CD8-positive, alpha-beta T cell (primary cell): ENCODE measurements at regions of chr7 and their contacts with region 1.

Region 1: GRCh38 chr7:150514748-150515222 is at the start of gene GIMAP7:
- DNase-seq: peak; percentile 36 to 87 (median 73)
- ATAC-seq: peak; percentile 82
- H3K4me3 ChIP-seq: peak within 1 kb of the TSS; percentile 63 to 76
- H3K4me3 Mint-ChIP-seq: peak within 1 kb of the TSS; percentile 100
- H3K27ac ChIP-seq: peak within 1 kb of the TSS; percentile 69 to 75
- H3K27ac Mint-ChIP-seq: peak within 1 kb of the TSS; percentile 99
- H3K4me1 ChIP-seq: peaks cover 45% of the 10 kb centered on the region
- H3K4me1 Mint-ChIP-seq: peaks cover 48% of the 10 kb centered on the region
- H3K27me3 ChIP-seq: no peaks in the 10 kb centered on the region
- H3K27me3 Mint-ChIP-seq: no peaks in the 10 kb centered on the region
- CTCF ChIP-seq: no peak
- total RNA-seq, gene GIMAP7: 21.2 to 29.7 TPM

Region 2: GRCh38 chr7:150476285-150476684 is 38.5 kb before region 1 on chr7:
- CTCF ChIA-PET with region 1: interaction called, 11 read pairs
- POLR2A ChIA-PET with region 1: interaction called, 193 read pairs
- intact Hi-C with region 1: loop called (anchors 1 to 2 kb)
- DNase-seq: no peak
- ATAC-seq: no peak
- H3K4me3 ChIP-seq: no peak overlapping the region
- H3K4me3 Mint-ChIP-seq: peak overlapping the region; percentile 1
- H3K27ac ChIP-seq: peak overlapping the region; percentile 55 to 91
- H3K27ac Mint-ChIP-seq: peak overlapping the region; percentile 100
- H3K4me1 ChIP-seq: peaks cover 64% of the 10 kb centered on the region
- H3K4me1 Mint-ChIP-seq: peaks cover 85% of the 10 kb centered on the region
- H3K27me3 ChIP-seq: no peaks in the 10 kb centered on the region
- H3K27me3 Mint-ChIP-seq: no peaks in the 10 kb centered on the region
- CTCF ChIP-seq: no peak

Region 3: DNA sequence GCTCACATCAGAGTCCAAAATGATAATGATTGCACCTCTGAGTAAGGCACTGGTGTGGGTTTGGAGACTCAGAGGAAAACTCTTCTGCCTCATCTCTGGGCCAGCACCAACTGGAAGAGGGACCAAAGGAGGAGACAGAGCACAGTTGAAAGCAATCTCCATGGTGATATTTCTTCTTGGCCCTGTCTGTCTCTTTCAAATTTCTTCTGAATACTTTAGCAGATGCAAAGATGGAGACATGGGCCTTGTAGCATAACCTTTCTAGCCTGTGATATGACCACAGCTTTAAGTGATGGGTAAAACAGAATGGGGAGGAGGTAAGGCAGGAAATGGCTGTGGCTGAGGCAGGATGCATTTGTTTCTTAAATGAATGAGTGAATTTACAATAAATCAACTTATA is 12.3 kb before region 1 on chr7:
- CTCF ChIA-PET with region 1: interaction called, 9 read pairs
- POLR2A ChIA-PET with region 1: interaction called, 27 read pairs
- intact Hi-C with region 1: loop called in 1 of 2 experiments (anchors 1 kb)
- DNase-seq: peak in 5 of 9 experiments; percentile 29 to 77 (median 61)
- ATAC-seq: peak; percentile 92
- H3K4me3 ChIP-seq: peak overlapping the region in 1 of 2 experiments; percentile 27
- H3K4me3 Mint-ChIP-seq: peak overlapping the region; percentile 23
- H3K27ac ChIP-seq: peak overlapping the region; percentile 22 to 61
- H3K27ac Mint-ChIP-seq: peak overlapping the region; percentile 86
- H3K4me1 ChIP-seq: peaks cover 46% of the 10 kb centered on the region
- H3K4me1 Mint-ChIP-seq: peaks cover 78% of the 10 kb centered on the region
- H3K27me3 ChIP-seq: no peaks in the 10 kb centered on the region
- H3K27me3 Mint-ChIP-seq: no peaks in the 10 kb centered on the region
- CTCF ChIP-seq: no peak

Region 4: DNA sequence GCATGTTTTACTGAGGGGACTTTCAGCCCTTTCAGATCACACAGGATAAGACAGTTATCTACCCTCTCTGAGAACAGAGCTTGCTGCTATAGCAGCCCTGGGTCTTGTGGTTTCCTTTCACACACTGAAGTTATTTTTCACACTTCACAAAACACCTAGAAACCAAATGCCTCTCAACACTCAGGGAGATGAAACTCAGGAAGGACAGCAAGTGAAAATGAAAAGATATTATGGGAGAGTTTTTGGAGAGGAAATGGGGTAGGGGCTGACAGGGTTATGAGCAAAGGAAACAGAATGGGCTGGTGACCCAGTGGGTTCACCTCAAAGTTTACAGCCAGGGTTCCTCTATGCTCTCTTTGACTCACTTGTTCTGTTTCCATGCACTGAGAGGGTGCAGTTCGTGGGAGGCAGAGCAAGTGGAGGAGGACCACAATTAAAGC is 153.7 kb after region 1 on chr7:
- CTCF ChIA-PET with region 1: no interaction called
- POLR2A ChIA-PET with region 1: interaction called, 18 read pairs
- intact Hi-C with region 1: no loop called
- DNase-seq: peak in 6 of 9 experiments; percentile 60 to 94 (median 72)
- ATAC-seq: peak; percentile 76
- H3K4me3 ChIP-seq: peak overlapping the region in 1 of 2 experiments; percentile 17
- H3K4me3 Mint-ChIP-seq: peak overlapping the region; percentile 36
- H3K27ac ChIP-seq: peak overlapping the region; percentile 63 to 95
- H3K27ac Mint-ChIP-seq: peak overlapping the region; percentile 97
- H3K4me1 ChIP-seq: peaks cover 88% of the 10 kb centered on the region
- H3K4me1 Mint-ChIP-seq: peaks cover 90% of the 10 kb centered on the region
- H3K27me3 ChIP-seq: no peaks in the 10 kb centered on the region
- H3K27me3 Mint-ChIP-seq: no peaks in the 10 kb centered on the region
- CTCF ChIP-seq: no peak

Region 5: DNA sequence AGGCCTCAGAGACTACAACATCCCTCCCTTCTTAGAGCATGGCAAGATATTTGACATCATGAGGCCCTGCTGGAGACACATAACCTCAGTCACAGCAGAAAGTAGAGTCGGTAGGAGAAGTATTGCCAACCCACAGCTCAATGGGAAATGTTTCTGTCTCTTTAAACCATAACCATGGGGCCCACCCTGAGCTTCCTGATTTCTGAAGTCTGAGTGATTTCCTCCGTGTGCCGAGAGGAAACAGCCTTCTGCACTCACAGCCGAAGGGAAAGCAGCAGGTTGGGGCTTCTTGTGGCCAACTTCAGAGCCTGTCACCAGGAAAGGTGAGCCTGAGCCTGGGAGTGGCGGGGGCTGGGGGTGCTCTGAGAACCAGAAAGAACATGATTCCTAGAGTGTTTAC is 201.6 kb after region 1 on chr7 and contains the start of gene GIMAP1:
- CTCF ChIA-PET with region 1: interaction called, 4 read pairs
- POLR2A ChIA-PET with region 1: interaction called, 29 read pairs
- intact Hi-C with region 1: no loop called
- DNase-seq: peak in 8 of 9 experiments; percentile 59 to 85 (median 73)
- ATAC-seq: peak; percentile 84
- H3K4me3 ChIP-seq: peak within 1 kb of the TSS; percentile 90 to 91
- H3K4me3 Mint-ChIP-seq: peak within 1 kb of the TSS; percentile 95
- H3K27ac ChIP-seq: peak within 1 kb of the TSS; percentile 73 to 87
- H3K27ac Mint-ChIP-seq: peak within 1 kb of the TSS; percentile 96
- H3K4me1 ChIP-seq: peaks cover 50% of the 10 kb centered on the region
- H3K4me1 Mint-ChIP-seq: peaks cover 67% of the 10 kb centered on the region
- H3K27me3 ChIP-seq: no peaks in the 10 kb centered on the region
- H3K27me3 Mint-ChIP-seq: no peaks in the 10 kb centered on the region
- CTCF ChIP-seq: no peak
- total RNA-seq, gene GIMAP1: 6.1 to 6.2 TPM

Region 6: DNA sequence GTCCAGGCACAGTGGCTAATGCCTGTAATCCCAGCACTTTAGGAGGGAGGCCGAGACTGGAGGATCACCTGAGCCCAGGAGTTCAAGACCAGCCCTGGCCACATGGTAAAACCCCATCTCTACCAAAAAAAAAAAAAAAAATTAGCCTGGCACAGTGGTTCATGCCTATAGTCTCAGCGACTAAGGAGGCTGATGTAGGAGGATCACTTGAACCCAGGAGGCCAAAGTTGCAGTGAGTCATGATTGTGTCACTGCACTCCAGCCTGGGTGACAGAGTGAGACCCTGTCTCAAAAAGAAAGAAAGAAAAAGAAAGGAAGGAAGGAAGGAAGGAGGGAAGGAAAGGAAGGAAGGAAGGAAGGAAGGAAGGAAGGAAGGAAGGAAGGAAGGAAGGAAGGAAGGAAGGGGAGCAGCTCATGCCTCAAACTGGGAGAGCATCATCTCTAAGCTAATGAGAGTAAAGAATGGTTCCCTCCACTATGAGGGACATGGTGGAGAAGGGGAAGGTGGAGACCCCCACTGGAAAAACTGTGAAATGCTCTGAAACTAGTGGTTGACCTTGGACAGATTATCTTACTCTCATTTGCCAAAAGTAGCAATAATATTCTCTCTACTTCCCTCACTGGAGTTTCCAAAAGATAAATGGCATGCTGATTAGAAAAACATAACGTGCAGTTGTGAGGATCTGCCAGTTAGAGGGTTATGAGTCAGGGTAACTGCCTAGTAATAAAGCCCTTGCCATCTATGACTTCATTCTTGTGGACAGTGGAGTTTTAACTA is 239.2 kb after region 1 on chr7:
- CTCF ChIA-PET with region 1: interaction called, 8 read pairs
- POLR2A ChIA-PET with region 1: interaction called, 23 read pairs
- intact Hi-C with region 1: loop called (anchors 1 to 2 kb)
- DNase-seq: peak in 2 of 9 experiments; percentile 57 to 73
- ATAC-seq: peak; percentile 8
- H3K4me3 ChIP-seq: no peak overlapping the region
- H3K4me3 Mint-ChIP-seq: peak overlapping the region; percentile 19
- H3K27ac ChIP-seq: peak overlapping the region in 1 of 2 experiments; percentile 83
- H3K27ac Mint-ChIP-seq: peak overlapping the region; percentile 94
- H3K4me1 ChIP-seq: peaks cover 76% of the 10 kb centered on the region
- H3K4me1 Mint-ChIP-seq: peaks cover 72% of the 10 kb centered on the region
- H3K27me3 ChIP-seq: no peaks in the 10 kb centered on the region
- H3K27me3 Mint-ChIP-seq: no peaks in the 10 kb centered on the region
- CTCF ChIP-seq: no peak